B cell (primary cell): ENCODE measurements at regions of chr17 and their contacts with region 1.

Region 1: DNA sequence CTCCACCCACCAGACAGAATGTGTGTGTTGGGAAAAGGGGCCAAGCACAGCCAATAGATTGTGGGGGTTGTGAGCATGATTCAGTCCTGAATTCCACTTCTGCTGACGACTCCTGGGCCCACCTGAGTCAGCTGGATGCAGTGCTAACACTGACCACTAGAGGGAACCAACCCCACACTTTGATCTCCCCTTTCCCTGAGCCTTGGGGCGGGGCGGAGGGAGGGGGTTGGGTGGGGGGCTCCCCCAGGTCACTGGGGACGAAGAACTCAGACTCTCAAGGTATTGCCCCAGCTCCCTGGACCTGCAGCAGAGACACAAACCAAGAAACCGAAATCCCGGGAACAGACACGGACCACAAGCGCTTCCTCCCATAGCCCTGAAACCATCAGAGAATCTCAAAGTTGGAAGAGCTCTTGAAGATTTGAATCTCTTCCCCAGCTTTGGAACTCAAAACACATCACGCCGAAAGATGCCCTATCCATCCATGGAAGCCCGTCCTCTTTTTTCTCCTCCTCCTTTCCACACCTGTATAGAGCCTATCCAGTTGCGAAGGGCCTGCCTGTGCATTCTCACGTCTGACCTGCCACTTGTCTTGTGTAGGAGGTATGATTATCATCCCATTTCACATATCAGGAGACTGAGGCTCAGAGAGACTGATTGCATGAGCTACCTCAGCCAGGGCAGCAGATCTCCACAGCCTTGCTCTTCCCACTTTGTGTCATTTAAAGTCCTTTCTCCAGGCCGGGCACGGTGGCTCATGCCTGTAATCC is 784 bp upstream of the CSHL1 start:
- DNase-seq: peak; percentile 77
- ATAC-seq: peak; percentile 55
- H3K4me3 ChIP-seq: no peak overlapping the region
- H3K4me3 Mint-ChIP-seq: no peak overlapping the region
- H3K27ac ChIP-seq: no peak overlapping the region
- H3K27ac Mint-ChIP-seq: peak overlapping the region; percentile 50
- H3K4me1 ChIP-seq: peaks cover 28 to 41% of the 10 kb centered on the region in 2 donors
- H3K4me1 Mint-ChIP-seq: peaks cover 41% of the 10 kb centered on the region
- H3K27me3 ChIP-seq: peaks cover 0 to 5% (median 0%) of the 10 kb centered on the region in 4 experiments
- H3K27me3 Mint-ChIP-seq: peaks cover 8% of the 10 kb centered on the region
- CTCF ChIP-seq: peak; percentile 82

Region 2: DNA sequence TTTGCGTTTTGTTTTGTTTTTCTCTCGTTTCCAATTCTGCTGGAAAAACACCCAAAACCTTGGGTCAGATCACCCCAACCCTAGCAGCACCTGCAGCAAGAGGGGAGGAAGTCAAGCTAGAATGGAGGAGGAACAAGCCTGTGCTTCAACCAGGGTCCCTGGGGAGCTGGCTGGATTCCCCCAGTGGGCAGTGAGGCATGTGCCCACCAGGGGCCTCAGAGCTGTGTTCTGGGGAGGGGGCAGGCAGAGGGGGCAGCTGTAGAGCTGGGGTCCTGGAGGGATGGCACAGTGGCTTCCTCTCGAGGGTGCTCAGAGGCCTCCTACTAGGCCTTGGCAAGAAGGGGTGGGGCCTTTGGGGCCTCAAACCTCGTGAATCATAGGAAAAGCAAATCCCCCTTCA is 13.8 kb after region 1 on chr17:
- CTCF ChIA-PET with region 1: interaction called, 15 read pairs
- POLR2A ChIA-PET with region 1: interaction called, 3 read pairs
- intact Hi-C with region 1: no loop called
- DNase-seq: peak; percentile 91
- ATAC-seq: peak; percentile 67
- H3K4me3 ChIP-seq: peak overlapping the region in 1 of 5 experiments; percentile 15
- H3K4me3 Mint-ChIP-seq: peak overlapping the region; percentile 74
- H3K27ac ChIP-seq: peak overlapping the region; percentile 85 to 89
- H3K27ac Mint-ChIP-seq: peak overlapping the region; percentile 92
- H3K4me1 ChIP-seq: peaks cover 87 to 98% of the 10 kb centered on the region in 2 donors
- H3K4me1 Mint-ChIP-seq: peaks cover 85% of the 10 kb centered on the region
- H3K27me3 ChIP-seq: no peaks in the 10 kb centered on the region
- H3K27me3 Mint-ChIP-seq: no peaks in the 10 kb centered on the region
- CTCF ChIP-seq: no peak

Region 3: DNA sequence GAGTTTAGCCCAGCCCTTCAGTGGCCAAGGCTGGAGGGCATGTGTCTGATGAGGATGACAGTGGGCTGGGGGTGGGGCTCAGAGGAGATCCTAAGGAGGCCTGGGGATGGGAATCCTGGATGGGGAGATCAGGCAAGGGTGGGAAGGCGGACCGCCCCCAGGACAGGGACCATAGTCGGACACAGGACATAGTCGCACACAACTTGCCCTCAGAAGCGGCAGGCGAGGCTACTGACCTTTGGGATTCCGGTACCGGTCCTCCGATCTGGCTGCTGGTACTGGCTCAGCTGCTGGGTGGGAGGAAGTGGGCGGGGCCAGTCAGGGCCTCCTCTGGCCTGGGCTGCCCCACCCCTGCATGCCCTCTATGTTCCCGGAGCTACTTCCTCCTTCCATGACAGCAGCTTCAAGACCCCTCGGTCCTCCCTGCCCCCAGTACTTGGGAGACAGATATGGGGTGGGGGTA is 19.3 kb after region 1 on chr17:
- CTCF ChIA-PET with region 1: interaction called, 13 read pairs
- POLR2A ChIA-PET with region 1: interaction called, 7 read pairs
- intact Hi-C with region 1: no loop called
- DNase-seq: peak; percentile 77
- ATAC-seq: peak; percentile 39
- H3K4me3 ChIP-seq: peak overlapping the region; percentile 80 to 100 (median 97)
- H3K4me3 Mint-ChIP-seq: peak overlapping the region; percentile 99
- H3K27ac ChIP-seq: peak overlapping the region; percentile 83 to 85
- H3K27ac Mint-ChIP-seq: peak overlapping the region; percentile 97
- H3K4me1 ChIP-seq: peaks cover 72 to 85% of the 10 kb centered on the region in 2 donors
- H3K4me1 Mint-ChIP-seq: peaks cover 86% of the 10 kb centered on the region
- H3K27me3 ChIP-seq: no peaks in the 10 kb centered on the region
- H3K27me3 Mint-ChIP-seq: no peaks in the 10 kb centered on the region
- CTCF ChIP-seq: no peak

Region 4: GRCh38 chr17:63984651-63985386 is 73.0 kb after region 1 on chr17:
- CTCF ChIA-PET with region 1: interaction called, 47 read pairs
- POLR2A ChIA-PET with region 1: no interaction called
- intact Hi-C with region 1: loop called (anchors 1 kb)
- DNase-seq: no peak
- ATAC-seq: peak; percentile 80
- H3K4me3 ChIP-seq: no peak overlapping the region
- H3K4me3 Mint-ChIP-seq: no peak overlapping the region
- H3K27ac ChIP-seq: no peak overlapping the region
- H3K27ac Mint-ChIP-seq: no peak overlapping the region
- H3K4me1 ChIP-seq: peaks cover 8 to 17% of the 10 kb centered on the region in 2 donors
- H3K4me1 Mint-ChIP-seq: peaks cover 19% of the 10 kb centered on the region
- H3K27me3 ChIP-seq: no peaks in the 10 kb centered on the region
- H3K27me3 Mint-ChIP-seq: no peaks in the 10 kb centered on the region
- CTCF ChIP-seq: no peak

Region 5: GRCh38 chr17:64038314-64039105 is 126.7 kb after region 1 on chr17:
- CTCF ChIA-PET with region 1: no interaction called
- POLR2A ChIA-PET with region 1: no interaction called
- intact Hi-C with region 1: no loop called
- DNase-seq: no peak
- ATAC-seq: no peak
- H3K4me3 ChIP-seq: no peak overlapping the region
- H3K4me3 Mint-ChIP-seq: no peak overlapping the region
- H3K27ac ChIP-seq: no peak overlapping the region
- H3K27ac Mint-ChIP-seq: no peak overlapping the region
- H3K4me1 ChIP-seq: no peaks in the 10 kb centered on the region
- H3K4me1 Mint-ChIP-seq: no peaks in the 10 kb centered on the region
- H3K27me3 ChIP-seq: no peaks in the 10 kb centered on the region
- H3K27me3 Mint-ChIP-seq: no peaks in the 10 kb centered on the region
- CTCF ChIP-seq: no peak